ENCODE measurements at regions of chr19 and their contacts with region 1.

Region 1: DNA sequence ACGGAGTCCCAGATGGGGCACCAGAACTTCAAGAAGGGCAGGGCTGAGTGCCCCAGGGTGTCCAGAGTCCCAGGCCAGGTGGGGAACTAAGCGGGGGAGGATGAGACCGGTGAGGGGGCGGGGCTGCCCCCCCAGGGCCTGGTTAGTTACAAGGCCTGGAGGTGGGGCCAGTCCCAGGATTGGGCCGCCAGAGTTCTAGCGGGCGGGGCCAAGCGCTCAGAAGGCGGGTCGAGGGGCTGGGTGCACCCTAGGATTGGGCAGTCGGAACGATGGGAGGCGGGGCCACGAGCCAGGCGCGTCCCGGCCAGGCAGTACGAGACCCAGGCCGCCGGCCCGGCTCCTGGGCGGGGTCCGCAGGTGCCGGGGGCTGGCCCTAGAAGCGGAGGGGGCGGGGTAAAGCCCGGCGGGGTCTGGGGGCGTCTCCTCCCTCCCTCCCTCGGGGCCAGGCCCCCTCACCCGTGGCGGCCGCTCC is 571 bp downstream of the ZNF653 start:
- DNase-seq: peak; percentile 97
- ATAC-seq: peak; percentile 93
- H3K4me3 Mint-ChIP-seq: peak overlapping the region; percentile 92
- H3K27ac Mint-ChIP-seq: peak overlapping the region; percentile 95
- H3K4me1 Mint-ChIP-seq: peaks cover 18% of the 10 kb centered on the region
- H3K27me3 Mint-ChIP-seq: no peaks in the 10 kb centered on the region
- CTCF ChIP-seq: no peak

Region 2: DNA sequence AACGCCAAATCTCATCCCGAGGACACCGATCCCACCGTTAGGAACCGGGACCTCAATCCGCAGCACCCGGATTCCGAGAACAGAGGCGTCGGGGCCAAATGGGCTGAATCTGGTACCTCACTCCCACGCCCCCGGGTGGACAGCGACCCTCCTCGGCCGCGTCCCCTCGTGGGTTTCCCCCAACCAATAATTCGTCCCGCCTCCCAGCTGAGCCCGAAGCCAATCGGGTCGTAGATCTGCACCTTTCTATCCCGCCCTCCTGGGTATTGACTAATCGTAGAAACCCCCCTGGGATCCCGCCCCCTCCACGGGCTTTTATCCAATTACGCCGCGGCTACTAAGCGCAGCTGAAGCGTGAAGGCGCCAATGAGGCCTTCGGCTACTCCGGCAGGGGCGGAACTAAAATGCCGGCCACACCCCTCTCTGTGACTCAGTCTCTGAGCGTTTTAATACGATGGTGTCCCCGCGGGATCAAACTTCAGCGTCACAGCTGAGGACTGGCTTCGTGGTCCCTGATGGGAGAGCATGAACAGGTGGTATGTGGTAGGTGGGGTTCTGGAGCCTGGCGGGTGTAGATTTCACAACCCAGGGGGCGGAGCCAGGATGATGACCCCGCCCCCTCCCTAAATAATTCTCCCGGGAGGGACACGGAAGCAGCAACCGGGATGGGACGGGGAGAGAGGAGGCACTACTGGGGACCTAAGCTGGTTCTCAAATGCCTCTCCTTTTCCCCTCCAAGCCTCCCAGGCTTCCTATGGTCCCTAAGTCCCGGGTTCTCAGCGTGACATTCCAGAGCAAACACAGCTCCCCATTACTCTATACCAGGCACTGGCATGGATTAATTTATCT is 158.8 kb before region 1 on chr19 and contains the starts of genes CCDC159 and TMEM205:
- CTCF ChIA-PET with region 1: no interaction called
- POLR2A ChIA-PET with region 1: no interaction called
- intact Hi-C with region 1: loop called (anchors 1 kb)
- DNase-seq: peak; percentile 93
- ATAC-seq: peak; percentile 95
- H3K4me3 Mint-ChIP-seq: peak within 1 kb of the TSS; percentile 98
- H3K27ac Mint-ChIP-seq: peak within 1 kb of the TSS; percentile 93
- H3K4me1 Mint-ChIP-seq: peaks cover 30% of the 10 kb centered on the region
- H3K27me3 Mint-ChIP-seq: no peaks in the 10 kb centered on the region
- CTCF ChIP-seq: no peak
- total RNA-seq, gene CCDC159: 27.6 and 32.1 TPM in 2 replicates
- total RNA-seq, gene TMEM205: 61.8 and 68.1 TPM in 2 replicates

Region 3: DNA sequence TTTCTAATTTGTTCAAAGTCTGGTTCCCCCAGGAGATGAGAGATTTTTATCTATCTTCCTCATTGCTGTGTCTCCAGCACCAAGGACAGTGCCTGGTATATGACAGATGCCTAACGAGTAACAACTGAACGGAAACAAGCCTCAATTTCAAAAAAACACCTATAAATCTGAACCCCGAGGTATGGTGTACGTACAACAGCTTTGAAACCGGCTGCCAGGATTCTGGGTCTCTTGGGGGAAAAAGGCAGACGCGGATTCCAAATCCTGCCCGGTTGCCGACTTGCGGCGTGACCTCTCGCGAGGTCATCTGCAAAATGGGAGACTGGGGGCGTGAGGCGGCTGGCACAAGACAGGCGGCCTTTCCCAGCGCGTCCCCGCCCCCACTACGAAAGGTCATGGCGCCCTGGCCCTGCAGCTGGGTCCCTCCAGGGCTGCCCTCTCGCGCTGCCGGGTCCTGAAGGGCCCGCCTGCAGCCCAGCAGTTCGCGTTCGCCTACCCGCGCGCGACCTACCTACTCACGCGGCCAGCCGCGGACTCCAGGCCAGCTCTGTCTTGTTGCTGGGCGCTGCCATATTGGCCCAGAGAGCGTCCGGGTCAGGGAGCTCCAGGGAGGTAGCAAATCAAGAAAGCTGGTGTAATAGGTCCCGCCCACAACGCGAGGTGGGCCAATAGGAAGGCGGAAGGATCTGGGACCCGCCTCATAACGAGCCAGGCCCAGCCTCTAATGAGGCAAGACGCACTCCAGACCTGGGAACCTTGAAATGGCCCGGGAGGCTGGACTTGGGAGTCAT is 23.7 kb after region 1 on chr19 and contains the start of gene ECSIT:
- CTCF ChIA-PET with region 1: no interaction called
- POLR2A ChIA-PET with region 1: interaction called, 4 read pairs
- intact Hi-C with region 1: loop called (anchors 1 kb)
- DNase-seq: peak; percentile 81
- ATAC-seq: peak; percentile 99
- H3K4me3 Mint-ChIP-seq: peak within 1 kb of the TSS; percentile 93
- H3K27ac Mint-ChIP-seq: peak within 1 kb of the TSS; percentile 89
- H3K4me1 Mint-ChIP-seq: peaks cover 13% of the 10 kb centered on the region
- H3K27me3 Mint-ChIP-seq: no peaks in the 10 kb centered on the region
- CTCF ChIP-seq: no peak
- total RNA-seq, gene ECSIT: 49.3 and 54.2 TPM in 2 replicates

Region 4: GRCh38 chr19:11558881-11559828 is 54.1 kb after region 1 on chr19 and contains the start of gene ELOF1:
- CTCF ChIA-PET with region 1: no interaction called
- POLR2A ChIA-PET with region 1: interaction called, 7 read pairs
- intact Hi-C with region 1: loop called (anchors 1 kb)
- DNase-seq: peak; percentile 88
- ATAC-seq: peak; percentile 86
- H3K4me3 Mint-ChIP-seq: peak within 1 kb of the TSS; percentile 98
- H3K27ac Mint-ChIP-seq: peak within 1 kb of the TSS; percentile 93
- H3K4me1 Mint-ChIP-seq: peaks cover 72% of the 10 kb centered on the region
- H3K27me3 Mint-ChIP-seq: no peaks in the 10 kb centered on the region
- CTCF ChIP-seq: no peak
- total RNA-seq, gene ELOF1: 61.7 and 66.1 TPM in 2 replicates

Region 5: DNA sequence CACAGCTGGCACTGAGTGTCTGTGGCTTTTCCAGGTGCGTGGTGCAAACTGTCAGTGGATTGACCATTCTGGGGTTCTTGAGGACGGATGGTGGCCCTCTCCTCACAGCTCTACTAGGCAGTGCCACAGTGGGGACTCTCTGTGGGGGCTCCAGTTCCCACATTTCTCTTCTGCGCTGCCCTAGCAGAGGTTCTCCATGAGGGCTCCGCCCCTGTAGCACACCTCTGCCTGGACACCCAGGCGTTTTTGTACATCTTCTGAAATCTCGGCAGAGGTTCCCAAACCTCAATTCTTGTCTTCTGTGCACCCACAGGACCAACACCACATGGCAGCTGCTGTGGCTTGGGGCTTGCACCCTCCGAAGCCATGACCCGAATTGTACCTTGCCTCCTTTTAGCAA is 101.4 kb after region 1 on chr19:
- CTCF ChIA-PET with region 1: no interaction called
- POLR2A ChIA-PET with region 1: no interaction called
- intact Hi-C with region 1: no loop called
- DNase-seq: no peak
- ATAC-seq: no peak
- H3K4me3 Mint-ChIP-seq: no peak overlapping the region
- H3K27ac Mint-ChIP-seq: no peak overlapping the region
- H3K4me1 Mint-ChIP-seq: peaks cover 12% of the 10 kb centered on the region
- H3K27me3 Mint-ChIP-seq: no peaks in the 10 kb centered on the region
- CTCF ChIP-seq: no peak

Measured in activated B cell treated with CpG ODN at 0.5 μM for 24 hours (primary cell).